GM10248 (cell line): ENCODE measurements at regions of chr14 and their contacts with region 1.

Region 1: GRCh38 chr14:20613094-20614037 is 22.2 kb upstream of the RNASE12 start:
- DNase-seq: peak; percentile 74
- CTCF ChIP-seq: peak; percentile 68

Region 2: GRCh38 chr14:20327005-20327869 is 286.1 kb before region 1 on chr14:
- CTCF ChIA-PET with region 1: interaction called, 101 read pairs
- POLR2A ChIA-PET with region 1: no interaction called
- DNase-seq: peak; percentile 60
- CTCF ChIP-seq: peak; percentile 58

Region 3: GRCh38 chr14:20530771-20531571 is 82.4 kb before region 1 on chr14:
- CTCF ChIA-PET with region 1: interaction called, 11 read pairs
- POLR2A ChIA-PET with region 1: no interaction called
- DNase-seq: peak; percentile 52
- CTCF ChIP-seq: peak; percentile 72

Region 4: GRCh38 chr14:20632682-20633428 is 19.5 kb after region 1 on chr14:
- CTCF ChIA-PET with region 1: interaction called, 16 read pairs
- POLR2A ChIA-PET with region 1: no interaction called
- DNase-seq: peak; percentile 81
- CTCF ChIP-seq: no peak

Region 5: DNA sequence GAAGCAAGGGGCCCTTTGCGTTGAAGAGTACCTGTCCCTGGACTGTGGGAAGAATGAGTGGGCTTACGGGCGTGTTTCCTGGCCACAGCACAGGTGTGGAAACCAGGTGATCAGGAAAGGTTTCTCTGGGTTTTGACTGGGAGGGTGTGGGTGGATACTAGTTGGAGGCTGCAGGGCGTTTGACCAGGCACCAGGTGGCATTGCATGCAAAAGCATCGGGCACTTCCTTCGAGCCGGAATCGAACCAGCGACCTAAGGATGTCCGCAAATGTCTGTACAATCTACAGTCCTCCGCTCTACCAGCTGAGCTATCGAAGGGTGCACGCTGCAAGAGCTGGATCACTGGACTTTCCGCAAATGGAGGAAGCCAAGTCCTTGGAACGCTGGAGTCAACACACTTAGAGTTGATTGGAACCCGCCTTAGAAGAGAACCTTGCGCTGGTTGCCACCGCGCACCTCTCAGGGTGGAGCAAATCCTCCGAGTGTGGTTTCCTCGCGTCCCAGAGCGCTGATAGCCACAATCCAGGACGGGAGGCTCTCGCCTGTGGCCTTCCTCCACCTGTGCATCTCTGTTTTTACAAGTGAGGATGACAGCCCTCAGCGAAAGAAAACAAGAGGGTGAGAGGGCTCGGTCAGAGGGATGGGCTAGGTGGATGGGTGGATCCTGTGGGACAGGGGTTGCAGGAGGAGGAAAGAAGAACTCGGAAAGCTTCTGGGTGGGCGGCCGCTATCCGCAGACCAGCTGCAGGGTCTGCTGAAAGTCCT is 49.8 kb after region 1 on chr14:
- CTCF ChIA-PET with region 1: interaction called, 11 read pairs
- POLR2A ChIA-PET with region 1: no interaction called
- DNase-seq: peak; percentile 55
- CTCF ChIP-seq: peak; percentile 59

Region 6: DNA sequence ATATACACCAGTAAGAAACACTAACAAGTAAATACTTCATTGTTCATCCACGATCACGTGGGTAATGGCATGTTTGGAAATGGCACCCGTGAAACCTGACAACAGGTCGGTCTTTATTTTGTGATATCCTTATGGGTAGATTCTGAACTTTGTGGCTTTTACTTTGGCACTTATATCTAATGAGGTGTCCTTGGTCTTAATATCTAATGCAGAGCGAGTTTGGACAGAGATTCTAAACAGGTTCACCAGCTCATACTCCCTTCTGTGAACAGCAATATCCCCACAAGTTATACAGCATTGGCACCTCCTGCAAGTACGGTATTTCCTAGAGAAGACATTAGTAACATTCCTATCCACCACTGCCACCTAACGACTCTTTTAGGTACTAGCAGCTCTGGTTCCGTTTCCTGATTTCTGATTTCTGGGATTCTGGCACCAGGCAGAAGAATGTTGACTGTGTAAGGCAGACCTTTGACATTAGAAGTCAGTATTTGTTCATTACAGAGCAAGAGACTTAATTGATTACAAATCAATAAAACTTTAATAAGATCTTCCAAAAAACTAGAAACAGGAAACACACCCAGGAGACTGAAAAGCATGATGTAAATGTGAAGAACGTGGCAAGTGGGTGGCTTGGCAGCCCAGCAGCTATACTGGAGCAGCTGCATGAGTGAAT is 77.6 kb after region 1 on chr14:
- CTCF ChIA-PET with region 1: interaction called, 49 read pairs
- POLR2A ChIA-PET with region 1: no interaction called
- DNase-seq: peak; percentile 69
- CTCF ChIP-seq: peak; percentile 76